WTC11 (cell line): ENCODE measurements at regions of chr6 and their contacts with region 1.

Region 1: DNA sequence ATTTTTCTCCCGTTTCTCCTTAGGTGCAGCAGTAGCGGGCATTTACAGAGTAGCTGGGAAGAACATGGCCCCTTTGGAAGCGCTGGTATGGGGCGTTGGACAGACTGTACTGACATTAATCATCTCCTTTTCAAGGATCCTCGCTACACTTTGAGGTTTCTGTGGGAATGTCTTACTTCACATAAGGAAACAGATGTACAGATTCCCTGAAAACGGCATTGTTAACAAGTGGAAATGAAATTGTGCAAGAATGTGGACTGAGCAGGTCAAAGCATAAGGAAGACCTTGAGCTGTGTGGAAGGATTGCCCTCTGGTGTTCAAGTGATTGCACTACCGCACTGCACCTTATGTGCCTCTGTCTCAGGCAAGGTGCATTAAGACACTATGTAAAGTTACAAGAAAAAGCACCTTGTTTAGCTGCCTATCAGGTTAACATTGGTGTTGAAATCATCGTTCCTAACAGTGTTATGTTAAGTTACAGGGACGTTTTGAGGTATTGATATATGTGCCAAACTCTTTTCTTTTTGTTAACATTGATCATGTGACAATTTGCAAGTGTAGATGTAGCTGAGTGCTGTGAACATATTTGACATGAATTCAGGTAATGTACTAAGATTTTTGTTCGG is 38.0 kb downstream of the TMEM170B start:
- DNase-seq: peak; percentile 63
- ATAC-seq: peak; percentile 100
- H3K4me3 Mint-ChIP-seq: no peak overlapping the region
- H3K27ac Mint-ChIP-seq: no peak overlapping the region
- H3K4me1 Mint-ChIP-seq: no peaks in the 10 kb centered on the region
- H3K27me3 Mint-ChIP-seq: no peaks in the 10 kb centered on the region
- CTCF ChIP-seq: peak; percentile 50

Region 2: DNA sequence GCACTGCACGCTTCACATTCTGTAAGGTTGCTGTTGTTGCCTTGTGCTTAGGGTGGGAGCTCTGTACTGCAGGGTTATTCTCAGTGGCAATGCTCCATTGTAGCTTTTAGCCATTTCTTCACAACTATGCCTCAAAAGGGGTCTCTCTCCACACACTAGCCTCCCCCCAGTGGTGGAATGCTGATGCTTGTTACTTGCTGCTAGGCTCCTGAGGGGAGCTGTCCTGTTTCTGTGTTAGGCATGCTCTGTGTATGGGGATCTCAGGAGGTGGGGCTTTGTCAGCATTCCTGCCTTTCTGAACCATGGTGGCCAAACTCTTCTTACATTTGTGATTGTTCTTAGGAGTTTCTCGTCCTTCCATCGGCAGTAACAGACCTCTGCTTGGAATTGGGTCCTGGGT is 19.2 kb before region 1 on chr6:
- CTCF ChIA-PET with region 1: interaction called, 10 read pairs
- POLR2A ChIA-PET with region 1: no interaction called
- DNase-seq: peak; percentile 32
- ATAC-seq: peak; percentile 100
- H3K4me3 Mint-ChIP-seq: no peak overlapping the region
- H3K27ac Mint-ChIP-seq: peak overlapping the region; percentile 64
- H3K4me1 Mint-ChIP-seq: peaks cover 17% of the 10 kb centered on the region
- H3K27me3 Mint-ChIP-seq: no peaks in the 10 kb centered on the region
- CTCF ChIP-seq: no peak

Region 3: DNA sequence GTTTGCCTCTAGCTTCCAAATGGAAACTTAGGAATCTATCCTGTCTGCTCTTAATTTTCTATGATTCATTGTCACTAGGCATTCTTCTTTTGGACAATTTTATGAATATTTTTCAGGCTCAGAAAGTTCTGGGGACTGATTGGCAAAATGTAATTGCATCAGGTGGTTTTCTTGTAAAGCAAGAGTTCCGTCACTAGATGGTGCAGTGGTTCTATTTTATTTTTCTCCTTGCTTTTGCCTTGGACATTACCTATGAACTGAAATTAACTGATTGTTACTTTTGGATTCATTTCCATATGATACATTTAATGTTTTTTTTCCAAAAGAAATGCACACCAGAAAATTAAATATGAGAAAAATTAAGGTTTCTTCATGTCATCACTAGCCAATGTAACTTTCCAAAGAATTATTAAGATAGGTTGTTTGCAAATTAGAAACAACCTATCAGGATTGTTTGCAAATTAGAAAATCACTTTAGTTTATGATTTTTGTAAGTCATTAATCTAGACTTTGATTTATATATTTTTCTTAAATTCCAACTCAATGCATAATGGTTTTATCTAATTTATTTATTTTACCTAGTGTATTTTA is 10.0 kb after region 1 on chr6:
- CTCF ChIA-PET with region 1: interaction called, 20 read pairs
- POLR2A ChIA-PET with region 1: no interaction called
- DNase-seq: no peak
- ATAC-seq: no peak; the same call in 1 of the 2 replicates
- H3K4me3 Mint-ChIP-seq: no peak overlapping the region
- H3K27ac Mint-ChIP-seq: no peak overlapping the region
- H3K4me1 Mint-ChIP-seq: peaks cover 25% of the 10 kb centered on the region
- H3K27me3 Mint-ChIP-seq: no peaks in the 10 kb centered on the region
- CTCF ChIP-seq: no peak; the same call in 1 of the 2 replicates

Region 4: GRCh38 chr6:11632795-11633511 is 57.4 kb after region 1 on chr6:
- CTCF ChIA-PET with region 1: no interaction called
- POLR2A ChIA-PET with region 1: no interaction called
- DNase-seq: no peak
- ATAC-seq: peak; percentile 47; the same call in 1 of the 2 replicates
- H3K4me3 Mint-ChIP-seq: no peak overlapping the region
- H3K27ac Mint-ChIP-seq: no peak overlapping the region
- H3K4me1 Mint-ChIP-seq: no peaks in the 10 kb centered on the region
- H3K27me3 Mint-ChIP-seq: no peaks in the 10 kb centered on the region
- CTCF ChIP-seq: no peak